Naive thymus-derived CD4-positive, alpha-beta T cell (primary cell): ENCODE measurements at regions of chr17 and their contacts with region 1.

Region 1: DNA sequence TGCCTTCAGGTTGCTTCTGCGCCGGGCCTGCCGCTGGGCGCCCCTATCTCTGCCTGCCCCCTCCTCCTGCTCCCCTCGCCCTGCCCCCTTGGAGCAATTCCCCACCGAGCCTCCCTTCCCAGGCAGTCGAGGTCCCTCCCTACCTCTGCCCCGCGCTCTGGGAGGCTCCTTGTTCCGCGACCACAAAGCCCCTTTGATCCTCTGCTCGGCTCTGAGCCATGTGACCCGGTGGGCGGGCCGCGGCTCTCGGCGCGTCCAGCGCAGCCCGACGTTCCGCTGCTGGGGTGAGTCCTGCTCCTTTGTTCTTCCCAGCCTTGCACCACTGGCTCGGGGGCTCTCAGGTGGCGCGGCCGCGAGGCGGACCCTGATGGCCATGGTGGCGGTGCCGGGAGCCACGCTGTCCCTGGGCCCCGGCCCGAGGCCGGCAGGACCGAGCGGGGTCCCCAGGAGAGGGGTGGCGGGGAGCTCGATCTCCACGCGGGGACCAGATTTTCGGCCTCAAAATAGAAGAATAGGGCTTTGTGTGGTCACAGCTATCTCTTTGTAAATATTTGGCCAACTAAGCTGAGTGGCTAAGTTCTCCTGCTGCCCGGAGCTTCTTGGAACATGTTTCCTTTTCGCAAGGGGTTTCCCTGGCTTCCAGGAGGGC is 310.6 kb downstream of the SEC14L1 start:
- DNase-seq: peak in 8 of 9 donors; percentile 64 to 82 (median 74)
- ATAC-seq: peak; percentile 75
- H3K4me3 ChIP-seq: peak overlapping the region; percentile 77
- H3K4me3 Mint-ChIP-seq: peak overlapping the region; percentile 92 to 100 (median 98)
- H3K27ac ChIP-seq: peak overlapping the region; percentile 92
- H3K27ac Mint-ChIP-seq: peak overlapping the region; percentile 93 to 100 (median 98)
- H3K4me1 ChIP-seq: peaks cover 31 to 40% of the 10 kb centered on the region in 2 donors
- H3K4me1 Mint-ChIP-seq: peaks cover 31 to 73% (median 37%) of the 10 kb centered on the region in 7 donors
- H3K27me3 ChIP-seq: no peaks in the 10 kb centered on the region
- H3K27me3 Mint-ChIP-seq: no peaks in the 10 kb centered on the region

Region 2: DNA sequence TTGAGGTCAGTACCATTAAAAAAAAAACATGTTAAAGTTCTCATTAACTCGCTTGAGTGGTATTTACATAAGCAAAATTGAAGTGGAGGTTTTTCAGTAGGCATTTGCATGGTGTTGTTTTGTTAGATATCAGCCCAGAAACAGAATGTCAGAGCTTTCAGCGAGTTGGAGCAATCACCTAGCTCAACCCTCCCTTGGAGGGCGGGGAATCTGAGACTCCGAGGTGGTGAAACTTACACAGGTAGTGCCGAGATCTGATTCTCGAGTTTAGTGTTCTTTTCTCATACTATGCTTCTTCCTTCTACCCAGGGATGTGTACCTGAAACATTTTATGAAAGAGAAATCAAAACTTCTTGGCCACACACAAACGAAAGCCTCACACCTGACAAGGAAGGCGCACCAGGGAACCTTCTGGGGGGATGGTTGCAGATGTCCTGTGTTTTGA is 304.0 kb before region 1 on chr17:
- CTCF ChIA-PET with region 1: no interaction called
- POLR2A ChIA-PET with region 1: no interaction called
- intact Hi-C with region 1: no loop called
- DNase-seq: no peak
- ATAC-seq: no peak
- H3K4me3 ChIP-seq: no peak overlapping the region
- H3K4me3 Mint-ChIP-seq: peak overlapping the region in 5 of 10 donors; percentile 13 to 71 (median 62)
- H3K27ac ChIP-seq: no peak overlapping the region
- H3K27ac Mint-ChIP-seq: peak overlapping the region in 6 of 9 donors; percentile 6 to 76 (median 66)
- H3K4me1 ChIP-seq: peaks cover 0 to 2% of the 10 kb centered on the region in 2 donors
- H3K4me1 Mint-ChIP-seq: peaks cover 26 to 70% (median 63%) of the 10 kb centered on the region in 7 donors
- H3K27me3 ChIP-seq: no peaks in the 10 kb centered on the region
- H3K27me3 Mint-ChIP-seq: no peaks in the 10 kb centered on the region

Region 3: DNA sequence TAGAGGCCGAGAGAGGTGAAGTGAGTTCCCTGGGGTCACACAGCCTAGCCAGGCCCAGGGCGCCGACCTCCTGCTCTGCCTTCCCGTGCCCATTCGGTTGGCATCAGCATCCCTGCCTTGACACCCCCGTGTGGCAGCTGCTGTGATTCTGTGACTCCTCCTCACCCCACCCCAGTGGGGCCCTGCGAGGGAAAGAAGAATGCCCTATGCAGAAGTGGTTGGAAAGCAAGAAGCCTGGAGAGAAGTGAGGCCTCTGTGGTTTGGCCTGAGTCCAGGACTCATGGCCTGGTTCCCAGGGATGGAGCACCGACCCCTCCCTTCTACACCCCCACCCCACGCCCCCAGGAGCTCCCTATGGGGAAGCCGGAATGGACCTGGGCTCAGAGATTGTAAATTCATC is 14.4 kb before region 1 on chr17:
- CTCF ChIA-PET with region 1: interaction called, 21 read pairs
- POLR2A ChIA-PET with region 1: interaction called, 3,353 read pairs
- intact Hi-C with region 1: loop called (anchors 1 kb)
- DNase-seq: peak in 1 of 9 donors; percentile 53
- ATAC-seq: peak; percentile 17
- H3K4me3 ChIP-seq: peak overlapping the region; percentile 67
- H3K4me3 Mint-ChIP-seq: peak overlapping the region; percentile 84 to 98 (median 95)
- H3K27ac ChIP-seq: peak overlapping the region; percentile 92
- H3K27ac Mint-ChIP-seq: peak overlapping the region; percentile 85 to 100 (median 99)
- H3K4me1 ChIP-seq: peaks cover 91 to 99% of the 10 kb centered on the region in 2 donors
- H3K4me1 Mint-ChIP-seq: peaks cover 65 to 94% (median 88%) of the 10 kb centered on the region in 7 donors
- H3K27me3 ChIP-seq: no peaks in the 10 kb centered on the region
- H3K27me3 Mint-ChIP-seq: no peaks in the 10 kb centered on the region

Region 4: DNA sequence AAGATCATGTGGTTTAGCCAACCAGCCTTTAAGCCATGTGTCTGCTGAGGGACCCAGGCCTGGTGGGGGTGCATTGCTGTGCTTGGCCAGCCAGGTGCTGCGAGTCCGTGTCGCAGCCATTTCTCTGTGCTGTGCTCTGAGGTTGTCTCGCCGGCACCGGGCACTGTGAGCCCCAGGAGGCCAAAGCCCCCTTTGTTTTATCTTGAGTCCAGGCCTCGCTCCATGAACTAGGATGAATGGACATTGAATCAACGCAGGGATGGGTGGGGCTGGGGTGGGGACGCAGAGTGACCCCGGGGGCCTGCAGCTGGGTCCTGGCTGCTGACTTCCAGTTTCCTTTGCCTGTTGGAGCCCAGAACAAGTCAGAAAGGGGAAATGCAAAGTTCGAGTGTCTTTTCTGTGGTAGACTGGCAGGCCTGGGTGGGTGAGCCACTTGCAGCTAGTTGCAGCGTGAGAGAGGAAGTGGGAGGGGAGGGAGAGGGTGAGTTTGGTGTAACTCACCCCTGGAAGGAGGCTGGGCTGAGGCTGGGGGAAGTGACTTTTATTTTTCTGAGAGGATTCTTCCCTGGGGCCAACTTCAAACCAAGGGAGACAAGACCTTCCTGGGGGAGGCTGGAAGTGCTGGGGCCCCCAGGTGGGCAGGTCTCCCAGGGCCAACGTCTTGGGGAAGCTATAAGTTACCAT is 14.1 kb after region 1 on chr17:
- CTCF ChIA-PET with region 1: interaction called, 6 read pairs
- POLR2A ChIA-PET with region 1: interaction called, 678 read pairs
- intact Hi-C with region 1: loop called (anchors 1 kb)
- DNase-seq: peak in 8 of 9 donors; percentile 67 to 89 (median 87)
- ATAC-seq: peak; percentile 97
- H3K4me3 ChIP-seq: peak overlapping the region; percentile 54
- H3K4me3 Mint-ChIP-seq: peak overlapping the region; percentile 79 to 87 (median 84)
- H3K27ac ChIP-seq: peak overlapping the region; percentile 64
- H3K27ac Mint-ChIP-seq: peak overlapping the region; percentile 88 to 100 (median 94)
- H3K4me1 ChIP-seq: peaks cover 88 to 90% of the 10 kb centered on the region in 2 donors
- H3K4me1 Mint-ChIP-seq: peaks cover 74 to 96% (median 86%) of the 10 kb centered on the region in 7 donors
- H3K27me3 ChIP-seq: no peaks in the 10 kb centered on the region
- H3K27me3 Mint-ChIP-seq: no peaks in the 10 kb centered on the region

Region 5: GRCh38 chr17:77476931-77477877 is 25.8 kb after region 1 on chr17:
- CTCF ChIA-PET with region 1: interaction called, 3 read pairs
- POLR2A ChIA-PET with region 1: interaction called, 97 read pairs
- intact Hi-C with region 1: no loop called
- DNase-seq: peak in 1 of 9 donors; percentile 23
- ATAC-seq: no peak
- H3K4me3 ChIP-seq: no peak overlapping the region
- H3K4me3 Mint-ChIP-seq: peak overlapping the region; percentile 20 to 85 (median 54)
- H3K27ac ChIP-seq: peak overlapping the region; percentile 71
- H3K27ac Mint-ChIP-seq: peak overlapping the region; percentile 62 to 97 (median 94)
- H3K4me1 ChIP-seq: peaks cover 61 to 82% of the 10 kb centered on the region in 2 donors
- H3K4me1 Mint-ChIP-seq: peaks cover 60 to 92% (median 73%) of the 10 kb centered on the region in 7 donors
- H3K27me3 ChIP-seq: no peaks in the 10 kb centered on the region
- H3K27me3 Mint-ChIP-seq: no peaks in the 10 kb centered on the region

Region 6: DNA sequence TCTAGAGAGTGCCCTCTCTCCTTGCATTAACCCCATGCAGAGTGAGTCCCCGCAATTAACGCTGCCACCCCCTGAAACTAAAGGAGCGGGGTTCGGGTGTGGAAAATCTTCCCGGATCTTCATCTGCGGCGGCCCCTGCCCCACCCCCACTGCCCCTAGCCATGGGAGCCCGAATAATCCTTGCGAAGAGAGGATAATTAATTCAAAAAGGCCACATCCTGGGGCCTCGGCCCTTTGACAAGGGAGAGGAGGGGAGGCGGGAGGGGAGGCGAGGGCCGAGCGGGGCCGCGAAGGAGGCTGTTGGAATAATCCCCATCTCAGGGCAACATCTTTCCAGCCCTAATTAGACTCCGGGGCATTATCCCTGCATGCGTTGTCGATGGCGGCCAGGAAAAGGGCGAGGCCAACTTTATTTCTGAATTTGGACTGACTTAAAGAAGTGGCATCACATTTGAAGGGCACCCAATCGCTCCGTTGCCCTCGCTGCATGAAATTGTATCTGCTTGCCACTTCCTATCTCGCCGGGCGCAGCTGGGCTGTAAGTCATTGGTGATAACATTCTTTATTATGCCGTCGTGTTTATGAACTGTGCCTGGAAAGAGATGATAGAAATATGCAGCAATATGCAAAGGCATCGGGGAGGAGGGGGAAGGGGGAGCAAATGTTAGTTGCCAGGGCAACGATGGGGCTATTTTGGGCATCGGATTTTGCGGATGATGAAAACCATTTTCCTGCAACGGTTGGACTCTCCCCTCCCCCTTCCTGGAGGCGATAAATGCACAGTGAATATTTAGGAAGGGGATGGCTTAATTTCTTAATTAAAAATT is 120.0 kb after region 1 on chr17:
- CTCF ChIA-PET with region 1: no interaction called
- POLR2A ChIA-PET with region 1: no interaction called
- intact Hi-C with region 1: no loop called
- DNase-seq: peak in 7 of 9 donors; percentile 7 to 51 (median 35)
- ATAC-seq: peak; percentile 72
- H3K4me3 ChIP-seq: peak overlapping the region; percentile 2
- H3K4me3 Mint-ChIP-seq: peak overlapping the region; percentile 31 to 84 (median 78)
- H3K27ac ChIP-seq: no peak overlapping the region
- H3K27ac Mint-ChIP-seq: peak overlapping the region in 4 of 9 donors; percentile 22 to 70 (median 37)
- H3K4me1 ChIP-seq: peaks cover 0 to 3% of the 10 kb centered on the region in 2 donors
- H3K4me1 Mint-ChIP-seq: peaks cover 7 to 15% (median 13%) of the 10 kb centered on the region in 7 donors
- H3K27me3 ChIP-seq: no peaks in the 10 kb centered on the region
- H3K27me3 Mint-ChIP-seq: peaks cover 0 to 66% (median 13%) of the 10 kb centered on the region in 5 donors